Heart right ventricle (tissue), 16 donors: ENCODE measurements at regions of chr2 and their contacts with region 1.

Region 1: GRCh38 chr2:11743846-11744553 is 2.4 kb upstream of the LPIN1 start:
- DNase-seq: peak; percentile 90 to 95
- ATAC-seq: peak; percentile 86 to 95 (median 92)
- H3K4me3 ChIP-seq: peak overlapping the region in 6 of 10 donors; percentile 20 to 37 (median 28)
- H3K27ac ChIP-seq: peak overlapping the region in 9 of 10 donors; percentile 33 to 80 (median 68)
- H3K4me1 ChIP-seq: peaks cover 4 to 56% (median 39%) of the 10 kb centered on the region in 9 donors
- H3K27me3 ChIP-seq: no peaks in the 10 kb centered on the region
- CTCF ChIP-seq: no peak

Region 2: DNA sequence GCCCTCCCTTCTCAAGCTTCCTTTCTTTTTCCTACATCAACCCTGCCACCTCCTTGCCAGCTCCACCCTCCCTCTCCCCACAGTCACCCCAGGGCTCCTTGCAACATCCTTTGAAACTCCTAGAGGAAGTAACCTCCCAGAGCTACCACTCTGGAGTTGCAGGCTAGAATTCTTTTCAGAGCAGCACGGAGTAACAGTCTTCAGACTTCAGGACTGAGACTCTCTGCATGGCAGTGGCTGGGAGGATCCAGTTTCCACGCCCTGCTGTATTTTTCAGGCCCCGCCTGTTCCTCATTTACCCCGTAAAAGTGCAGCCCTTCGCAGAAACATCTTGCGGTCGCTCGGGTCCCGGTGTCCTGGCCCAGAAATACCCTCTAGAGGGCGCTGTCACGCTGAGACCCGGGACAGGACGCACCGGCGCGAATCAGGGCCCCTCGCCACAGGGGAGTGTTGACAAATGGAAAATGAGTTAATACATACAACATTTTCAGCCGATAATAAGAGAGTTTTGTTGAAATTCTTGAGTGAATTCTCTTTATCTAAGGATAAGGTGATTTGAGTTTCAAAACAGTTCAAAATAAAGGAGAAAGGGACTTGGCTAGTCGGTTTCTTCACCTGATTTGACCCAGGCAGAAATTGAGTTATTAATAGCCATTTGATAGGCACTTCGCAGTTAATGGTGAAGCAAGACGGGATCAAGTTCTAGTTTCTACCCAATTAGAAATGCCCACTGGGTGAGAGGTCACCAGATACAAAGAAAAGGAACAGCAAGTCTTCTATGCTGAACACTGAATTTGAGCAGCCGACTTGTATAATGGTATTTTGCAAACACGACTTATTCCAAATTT is 55.6 kb before region 1 on chr2:
- intact Hi-C with region 1: loop called in 1 of 10 experiments (anchors 2 kb)
- DNase-seq: peak; percentile 80 to 84
- ATAC-seq: peak; percentile 81 to 94 (median 88)
- H3K4me3 ChIP-seq: peak overlapping the region in 8 of 10 donors; percentile 4 to 43 (median 31)
- H3K27ac ChIP-seq: peak overlapping the region in 8 of 10 donors; percentile 1 to 69 (median 44)
- H3K4me1 ChIP-seq: peaks cover 0 to 32% (median 19%) of the 10 kb centered on the region in 9 donors
- H3K27me3 ChIP-seq: peaks cover 0 to 17% (median 9%) of the 10 kb centered on the region in 7 donors
- CTCF ChIP-seq: peak; percentile 71 to 93 (median 88)

Region 3: DNA sequence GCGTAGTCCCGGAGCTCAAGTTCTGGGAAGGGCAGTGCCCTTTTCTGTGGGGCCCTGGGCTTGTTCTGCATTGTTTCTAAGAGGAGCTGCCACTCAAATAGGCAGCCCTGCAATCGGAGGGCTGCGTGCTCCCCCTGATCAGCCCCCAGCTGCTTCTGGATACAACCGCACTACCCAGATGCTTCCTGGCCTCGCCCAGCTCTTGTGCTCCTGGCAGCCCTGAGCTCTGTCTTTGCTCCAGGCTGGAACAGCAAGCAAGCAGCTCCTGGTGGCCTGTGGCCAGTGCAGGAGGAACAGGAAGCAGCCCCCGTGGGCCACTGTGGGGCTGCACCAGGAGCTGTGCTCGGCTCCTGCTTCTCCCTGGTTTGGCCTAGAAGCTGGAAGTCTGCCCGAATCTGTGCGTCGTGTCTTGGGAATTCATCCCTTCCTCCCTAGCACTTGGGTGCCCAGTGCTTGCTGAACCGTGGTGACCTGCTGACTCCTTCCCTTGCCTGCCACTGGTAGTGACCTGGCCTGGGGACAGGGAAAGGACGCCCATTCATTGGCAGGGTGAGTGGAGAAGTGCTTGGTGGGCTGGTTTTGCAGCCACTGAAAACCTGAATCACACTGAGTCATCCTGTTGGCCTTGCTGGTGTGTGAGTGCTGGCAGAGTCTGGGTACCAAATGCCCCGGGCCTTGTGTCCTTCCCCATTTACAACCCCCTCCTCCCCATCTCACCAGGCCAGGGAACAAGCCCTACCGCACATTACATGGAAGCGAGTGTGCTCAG is 46.7 kb before region 1 on chr2:
- intact Hi-C with region 1: loop called in 3 of 10 experiments (anchors 2 to 5 kb)
- DNase-seq: peak; percentile 25 to 46
- ATAC-seq: peak in 7 of 8 donors; percentile 14 to 57 (median 27)
- H3K4me3 ChIP-seq: no peak overlapping the region
- H3K27ac ChIP-seq: peak overlapping the region in 8 of 10 donors; percentile 19 to 76 (median 60)
- H3K4me1 ChIP-seq: peaks cover 0 to 41% (median 26%) of the 10 kb centered on the region in 9 donors
- H3K27me3 ChIP-seq: no peaks in the 10 kb centered on the region
- CTCF ChIP-seq: no peak

Region 4: GRCh38 chr2:11778923-11779757 is 35.1 kb after region 1 on chr2:
- intact Hi-C with region 1: loop called in 9 of 10 experiments (anchors 2 to 5 kb)
- DNase-seq: peak; percentile 79 to 85
- ATAC-seq: peak; percentile 90 to 94 (median 92)
- H3K4me3 ChIP-seq: peak overlapping the region in 6 of 10 donors; percentile 16 to 36 (median 24)
- H3K27ac ChIP-seq: peak overlapping the region in 1 of 10 donors; percentile 54
- H3K4me1 ChIP-seq: peaks cover 0 to 36% (median 20%) of the 10 kb centered on the region in 9 donors
- H3K27me3 ChIP-seq: no peaks in the 10 kb centered on the region
- CTCF ChIP-seq: peak; percentile 96 to 99 (median 97)